Heart left ventricle (tissue), 16 donors: ENCODE measurements at regions of chr1 and their contacts with region 1.

Region 1: DNA sequence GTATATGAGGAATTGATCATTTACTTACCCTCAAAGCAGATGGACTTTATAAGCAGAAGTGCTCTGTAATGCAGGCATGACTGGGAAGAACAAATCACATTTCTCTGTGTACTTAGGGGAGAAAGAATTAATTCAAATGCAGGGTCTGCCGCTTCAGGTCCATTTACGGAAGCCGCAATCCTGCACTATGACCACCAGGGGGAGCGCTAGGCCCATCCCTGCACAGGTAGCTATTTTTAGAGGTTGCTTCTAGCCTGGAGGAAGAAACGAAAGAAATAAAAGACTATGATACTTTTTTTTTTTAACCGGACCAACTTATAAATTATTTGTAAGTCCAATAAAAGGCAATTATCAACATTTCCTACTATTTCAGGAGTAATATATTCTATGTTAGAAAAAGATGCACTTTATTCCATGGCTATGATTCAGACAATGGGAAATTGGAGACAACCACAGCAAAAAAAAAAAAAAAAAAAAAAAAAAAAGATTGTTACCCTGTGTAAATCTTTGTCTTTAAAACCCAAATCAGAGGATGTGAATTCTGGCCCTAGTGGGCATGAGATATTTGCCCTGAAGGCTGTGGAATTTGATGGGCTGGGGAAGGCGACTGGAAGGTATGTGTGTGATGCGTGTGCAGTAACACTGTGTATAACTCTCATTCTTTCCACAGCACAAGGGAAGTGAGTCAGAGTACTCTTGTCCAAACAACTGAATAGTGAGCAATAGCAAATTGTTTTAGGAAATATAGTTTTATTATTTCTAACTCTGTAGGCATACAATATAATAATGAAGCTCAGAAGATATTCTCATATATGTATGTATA is 12.9 kb upstream of the FYB2 start:
- DNase-seq: peak; percentile 47 to 78 (median 60)
- ATAC-seq: peak; percentile 65 to 85 (median 74)
- H3K4me3 ChIP-seq: peak overlapping the region in 3 of 12 donors; percentile 2 to 31 (median 15)
- H3K27ac ChIP-seq: no peak overlapping the region
- H3K4me1 ChIP-seq: peaks cover 0 to 6% (median 0%) of the 10 kb centered on the region in 12 donors
- H3K27me3 ChIP-seq: peaks cover 0 to 4% (median 0%) of the 10 kb centered on the region in 9 donors
- CTCF ChIP-seq: peak; percentile 95 to 99 (median 98)
- POLR2A ChIP-seq: no peak

Region 2: GRCh38 chr1:56967900-56968832 is 136.1 kb after region 1 on chr1:
- intact Hi-C with region 1: loop called in 6 of 10 experiments (anchors 2 to 10 kb)
- DNase-seq: peak in 2 of 5 donors; percentile 19 to 32
- ATAC-seq: no peak
- H3K4me3 ChIP-seq: no peak overlapping the region
- H3K27ac ChIP-seq: no peak overlapping the region
- H3K4me1 ChIP-seq: no peaks in the 10 kb centered on the region
- H3K27me3 ChIP-seq: no peaks in the 10 kb centered on the region
- CTCF ChIP-seq: peak in 11 of 12 donors; percentile 12 to 56 (median 42)
- POLR2A ChIP-seq: no peak

Region 3: GRCh38 chr1:57061369-57061768 is 229.3 kb after region 1 on chr1:
- intact Hi-C with region 1: loop called in 3 of 10 experiments (anchors 5 to 10 kb)
- DNase-seq: no peak
- ATAC-seq: peak; percentile 47 to 78 (median 63)
- H3K4me3 ChIP-seq: no peak overlapping the region
- H3K27ac ChIP-seq: no peak overlapping the region
- H3K4me1 ChIP-seq: peaks cover 0 to 10% (median 0%) of the 10 kb centered on the region in 12 donors
- H3K27me3 ChIP-seq: no peaks in the 10 kb centered on the region
- CTCF ChIP-seq: peak in 3 of 12 donors; percentile 6 to 19 (median 11)
- POLR2A ChIP-seq: no peak

Region 4: GRCh38 chr1:57340334-57341070 is 508.4 kb after region 1 on chr1:
- intact Hi-C with region 1: loop called in 8 of 10 experiments (anchors 5 to 10 kb)
- DNase-seq: no peak
- ATAC-seq: peak in 3 of 4 donors; percentile 60 to 65 (median 61)
- H3K4me3 ChIP-seq: no peak overlapping the region
- H3K27ac ChIP-seq: no peak overlapping the region
- H3K4me1 ChIP-seq: peaks cover 0 to 3% (median 0%) of the 10 kb centered on the region in 12 donors
- H3K27me3 ChIP-seq: no peaks in the 10 kb centered on the region
- CTCF ChIP-seq: peak in 7 of 12 donors; percentile 4 to 32 (median 21)
- POLR2A ChIP-seq: no peak

Region 5: DNA sequence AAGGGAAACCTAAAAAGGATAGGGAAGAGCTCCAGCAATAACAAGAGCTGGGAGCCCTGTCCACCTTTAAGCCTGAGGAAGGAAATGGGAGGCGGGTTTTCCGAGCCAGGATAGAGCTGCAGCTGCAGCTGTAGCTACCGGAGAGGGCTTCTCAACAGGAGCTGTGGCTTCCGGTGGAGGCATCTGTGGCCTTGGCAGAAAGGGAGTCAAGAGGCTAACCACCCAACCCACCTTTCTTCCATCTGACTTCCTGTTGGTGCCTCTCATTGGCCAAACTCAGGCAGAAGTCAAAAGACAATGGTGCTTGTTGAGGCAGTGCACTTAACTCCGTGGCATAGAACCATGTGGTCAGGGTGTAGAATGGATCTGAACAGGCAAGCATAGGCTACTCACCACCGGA is 904.9 kb after region 1 on chr1:
- intact Hi-C with region 1: loop called in 1 of 10 experiments (anchors 10 kb)
- DNase-seq: no peak
- ATAC-seq: no peak
- H3K4me3 ChIP-seq: no peak overlapping the region
- H3K27ac ChIP-seq: no peak overlapping the region
- H3K4me1 ChIP-seq: no peaks in the 10 kb centered on the region
- H3K27me3 ChIP-seq: no peaks in the 10 kb centered on the region
- CTCF ChIP-seq: no peak
- POLR2A ChIP-seq: no peak

Region 6: GRCh38 chr1:58162952-58163550 is 1331.0 kb after region 1 on chr1:
- intact Hi-C with region 1: loop called in 6 of 10 experiments (anchors 2 to 10 kb)
- DNase-seq: peak in 4 of 5 donors; percentile 64 to 77 (median 64)
- ATAC-seq: peak; percentile 71 to 95 (median 91)
- H3K4me3 ChIP-seq: no peak overlapping the region
- H3K27ac ChIP-seq: peak overlapping the region in 2 of 12 donors; percentile 25 to 46
- H3K4me1 ChIP-seq: peaks cover 0 to 6% (median 1%) of the 10 kb centered on the region in 12 donors
- H3K27me3 ChIP-seq: no peaks in the 10 kb centered on the region
- CTCF ChIP-seq: peak; percentile 77 to 92 (median 86)
- POLR2A ChIP-seq: no peak